ENCODE measurements at regions of chr1 and their contacts with region 1.

Region 1: GRCh38 chr1:168603501-168604110 is 27.2 kb downstream of the XCL1 start:
- DNase-seq: peak; percentile 78

Region 2: GRCh38 chr1:168811176-168811575 is 207.6 kb after region 1 on chr1:
- intact Hi-C with region 1: no loop called
- DNase-seq: no peak

Region 3: GRCh38 chr1:169193191-169193850 is 589.7 kb after region 1 on chr1:
- intact Hi-C with region 1: loop called (anchors 10 kb)
- DNase-seq: no peak

Region 4: DNA sequence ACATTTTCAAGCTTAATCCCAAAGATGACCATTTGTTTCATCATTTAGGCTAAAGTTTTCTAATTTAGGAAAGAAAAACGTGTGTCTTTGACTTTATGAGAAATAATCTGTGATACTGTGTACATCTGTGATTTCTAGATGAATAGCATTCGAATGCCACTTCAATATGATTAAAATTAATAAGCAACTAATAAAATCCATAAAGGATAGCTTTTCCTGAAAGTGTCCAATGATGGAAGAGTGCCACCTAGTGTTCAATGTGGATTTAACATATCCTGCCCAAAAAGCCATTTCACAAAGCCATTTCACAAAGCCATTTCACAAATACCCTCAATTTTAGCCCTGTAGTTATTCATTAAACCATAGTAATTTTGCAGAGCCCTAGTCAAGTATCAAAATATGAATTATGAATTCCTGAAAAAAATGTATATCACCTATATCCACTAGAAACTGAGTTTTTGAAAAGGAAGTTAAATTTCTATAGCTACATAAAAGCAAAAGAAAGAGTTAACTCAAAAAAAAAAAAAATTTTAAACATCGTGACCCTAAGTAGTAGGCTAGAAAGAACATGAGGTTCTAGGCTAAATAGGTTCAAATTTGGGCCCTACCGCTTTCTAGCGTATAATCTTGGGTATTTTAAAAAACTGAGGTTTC is 744.9 kb after region 1 on chr1:
- intact Hi-C with region 1: loop called (anchors 2 kb)
- DNase-seq: no peak

Region 5: GRCh38 chr1:169546087-169546995 is 942.7 kb after region 1 on chr1:
- intact Hi-C with region 1: loop called (anchors 10 kb)
- DNase-seq: no peak